GM10248 (cell line): ENCODE measurements at regions of chr4 and their contacts with region 1.

Region 1: DNA sequence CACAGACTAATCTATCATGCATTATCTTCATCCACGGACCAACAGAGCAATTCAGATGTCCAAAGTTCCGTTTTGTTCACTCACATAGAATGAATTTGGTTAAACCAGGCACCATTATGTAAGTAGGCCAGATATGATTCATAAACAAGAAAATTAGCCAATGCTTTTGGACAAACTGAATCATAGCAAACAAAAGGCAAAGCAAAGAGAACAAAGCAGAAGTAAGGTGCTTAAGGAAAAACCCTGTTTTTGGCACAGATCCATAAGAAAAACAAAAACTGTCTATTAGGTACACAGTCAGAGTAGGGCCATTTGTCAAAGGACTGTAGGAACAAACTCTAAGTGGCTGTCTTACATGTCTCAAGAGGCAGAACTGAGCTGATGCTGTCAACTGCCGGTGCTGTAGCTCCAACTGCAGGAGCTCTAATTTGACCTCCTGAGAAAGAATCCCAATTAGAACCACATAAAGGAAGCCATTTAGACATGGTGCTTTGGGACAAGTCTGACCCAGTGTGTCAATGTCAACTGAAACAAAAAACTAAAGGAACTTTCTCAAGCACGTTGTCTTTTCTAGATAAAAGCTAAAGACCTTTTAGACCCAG is 146.7 kb downstream of the COL25A1 start:
- DNase-seq: no peak
- CTCF ChIP-seq: no peak

Region 2: DNA sequence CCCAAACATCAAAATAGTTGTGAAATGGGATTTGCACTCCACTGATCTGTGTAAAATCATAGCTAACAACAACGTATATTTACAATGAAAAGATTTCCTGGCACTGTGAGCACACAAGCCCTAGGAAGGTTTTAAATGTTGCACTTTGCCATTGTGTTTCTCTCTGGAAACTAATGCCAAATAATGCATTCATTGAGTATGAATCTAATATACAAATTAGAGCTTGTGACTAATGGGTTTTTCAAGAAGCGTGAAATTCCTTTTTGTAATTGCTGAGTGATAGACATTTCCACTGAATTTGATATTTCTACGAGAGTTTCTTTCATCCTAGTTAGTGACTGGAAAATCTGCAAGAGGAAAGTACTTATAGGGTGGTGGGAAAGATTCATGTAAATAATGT is 10.8 kb after region 1 on chr4:
- CTCF ChIA-PET with region 1: interaction called, 19 read pairs
- POLR2A ChIA-PET with region 1: no interaction called
- DNase-seq: no peak
- CTCF ChIP-seq: no peak